Caco-2 (cell line): ENCODE measurements at regions of chr3 and their contacts with region 1.

Region 1: GRCh38 chr3:188749010-188749617 is 422.7 kb upstream of the TPRG1 start:
- DNase-seq: peak in 1 of 2 experiments; percentile 13
- H3K4me3 ChIP-seq: no peak overlapping the region
- H3K4me3 Mint-ChIP-seq: no peak overlapping the region
- H3K27ac Mint-ChIP-seq: no peak overlapping the region
- H3K4me1 ChIP-seq: peaks cover 47% of the 10 kb centered on the region
- H3K4me1 Mint-ChIP-seq: peaks cover 41% of the 10 kb centered on the region
- H3K27me3 ChIP-seq: no peaks in the 10 kb centered on the region
- H3K27me3 Mint-ChIP-seq: no peaks in the 10 kb centered on the region
- CTCF ChIP-seq: peak in 1 of 2 experiments; percentile 21

Region 2: DNA sequence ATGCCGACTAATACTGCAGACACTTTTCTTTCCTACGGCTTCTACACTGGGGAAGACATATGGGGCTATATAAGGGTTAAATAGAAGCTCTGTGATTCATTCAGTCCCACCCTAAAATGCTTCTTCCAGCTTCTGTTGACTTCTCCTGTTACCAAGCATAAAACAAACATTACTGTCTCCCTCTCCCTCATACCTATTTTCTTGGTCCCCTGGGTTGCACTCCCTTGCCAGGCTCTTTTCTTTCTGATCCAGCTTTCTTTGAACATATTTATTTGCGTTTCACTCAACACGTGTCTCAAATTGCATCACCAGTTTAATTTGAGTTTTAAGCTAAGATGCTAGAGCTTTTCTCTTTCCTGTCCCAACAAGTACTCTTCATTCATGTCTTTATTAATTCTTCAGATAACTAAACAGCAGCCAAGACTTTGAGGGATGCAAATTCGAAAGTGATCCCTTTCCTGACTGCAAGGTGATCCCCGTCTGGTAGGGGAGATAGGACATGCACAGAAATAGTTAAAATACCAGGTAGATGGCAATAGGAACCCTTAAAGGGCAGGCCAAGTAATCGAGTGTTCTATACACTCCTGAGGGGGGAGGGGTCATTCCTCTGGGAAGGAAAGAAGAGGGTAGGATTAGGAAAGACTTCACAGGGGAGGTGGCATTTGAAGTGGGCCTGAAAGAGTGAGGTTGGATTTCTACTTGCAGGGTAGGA is 805.3 kb before region 1 on chr3:
- CTCF ChIA-PET with region 1: no interaction called
- POLR2A ChIA-PET with region 1: interaction called, 3 read pairs
- intact Hi-C with region 1: loop called (anchors 5 kb)
- DNase-seq: peak in 1 of 2 experiments; percentile 25
- H3K4me3 ChIP-seq: no peak overlapping the region
- H3K4me3 Mint-ChIP-seq: no peak overlapping the region
- H3K27ac Mint-ChIP-seq: no peak overlapping the region
- H3K4me1 ChIP-seq: peaks cover 21% of the 10 kb centered on the region
- H3K4me1 Mint-ChIP-seq: peaks cover 7% of the 10 kb centered on the region
- H3K27me3 ChIP-seq: no peaks in the 10 kb centered on the region
- H3K27me3 Mint-ChIP-seq: no peaks in the 10 kb centered on the region
- CTCF ChIP-seq: no peak

Region 3: GRCh38 chr3:188294823-188295487 is 454.2 kb before region 1 on chr3:
- CTCF ChIA-PET with region 1: no interaction called
- POLR2A ChIA-PET with region 1: no interaction called
- intact Hi-C with region 1: loop called (anchors 2 kb)
- DNase-seq: peak; percentile 46 to 53
- H3K4me3 ChIP-seq: no peak overlapping the region
- H3K4me3 Mint-ChIP-seq: peak overlapping the region; percentile 53
- H3K27ac Mint-ChIP-seq: peak overlapping the region; percentile 78
- H3K4me1 ChIP-seq: peaks cover 57% of the 10 kb centered on the region
- H3K4me1 Mint-ChIP-seq: peaks cover 68% of the 10 kb centered on the region
- H3K27me3 ChIP-seq: no peaks in the 10 kb centered on the region
- H3K27me3 Mint-ChIP-seq: no peaks in the 10 kb centered on the region
- CTCF ChIP-seq: no peak

Region 4: GRCh38 chr3:188458756-188459155 is 290.4 kb before region 1 on chr3:
- CTCF ChIA-PET with region 1: no interaction called
- POLR2A ChIA-PET with region 1: no interaction called
- intact Hi-C with region 1: no loop called
- DNase-seq: no peak
- H3K4me3 ChIP-seq: no peak overlapping the region
- H3K4me3 Mint-ChIP-seq: no peak overlapping the region
- H3K27ac Mint-ChIP-seq: no peak overlapping the region
- H3K4me1 ChIP-seq: no peaks in the 10 kb centered on the region
- H3K4me1 Mint-ChIP-seq: peaks cover under 1% of the 10 kb centered on the region
- H3K27me3 ChIP-seq: no peaks in the 10 kb centered on the region
- H3K27me3 Mint-ChIP-seq: no peaks in the 10 kb centered on the region
- CTCF ChIP-seq: no peak

Region 5: DNA sequence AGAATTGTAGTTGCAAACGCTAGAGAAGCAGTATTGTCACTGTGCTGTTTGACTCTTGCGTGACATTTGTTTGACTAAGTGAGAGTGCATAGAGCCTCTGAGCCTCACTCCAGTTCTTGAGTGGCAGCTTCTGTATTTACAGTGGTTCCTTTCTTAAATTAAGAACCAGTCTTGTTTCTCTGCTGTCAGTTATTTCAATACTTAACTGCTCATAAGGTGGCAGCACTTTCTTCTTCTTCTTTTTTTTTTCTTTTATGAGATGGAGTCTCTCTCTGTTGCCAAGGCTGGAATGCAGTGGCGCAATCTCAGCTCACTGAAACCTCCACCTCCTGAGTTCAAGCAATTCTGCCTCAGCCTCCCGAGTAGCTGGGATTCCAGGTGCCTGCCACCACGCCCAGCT is 223.1 kb before region 1 on chr3:
- CTCF ChIA-PET with region 1: no interaction called
- POLR2A ChIA-PET with region 1: no interaction called
- intact Hi-C with region 1: loop called (anchors 2 kb)
- DNase-seq: peak; percentile 35 to 55
- H3K4me3 ChIP-seq: no peak overlapping the region
- H3K4me3 Mint-ChIP-seq: no peak overlapping the region
- H3K27ac Mint-ChIP-seq: peak overlapping the region; percentile 42
- H3K4me1 ChIP-seq: peaks cover 10% of the 10 kb centered on the region; the same call in 1 of the 2 replicates
- H3K4me1 Mint-ChIP-seq: peaks cover 11% of the 10 kb centered on the region
- H3K27me3 ChIP-seq: no peaks in the 10 kb centered on the region
- H3K27me3 Mint-ChIP-seq: no peaks in the 10 kb centered on the region
- CTCF ChIP-seq: no peak

Region 6: GRCh38 chr3:188697127-188697526 is 52.0 kb before region 1 on chr3:
- CTCF ChIA-PET with region 1: no interaction called
- POLR2A ChIA-PET with region 1: no interaction called
- intact Hi-C with region 1: no loop called
- DNase-seq: no peak
- H3K4me3 ChIP-seq: no peak overlapping the region
- H3K4me3 Mint-ChIP-seq: no peak overlapping the region
- H3K27ac Mint-ChIP-seq: no peak overlapping the region
- H3K4me1 ChIP-seq: no peaks in the 10 kb centered on the region
- H3K4me1 Mint-ChIP-seq: no peaks in the 10 kb centered on the region
- H3K27me3 ChIP-seq: no peaks in the 10 kb centered on the region; the same call in 1 of the 2 replicates
- H3K27me3 Mint-ChIP-seq: no peaks in the 10 kb centered on the region
- CTCF ChIP-seq: no peak

Region 7: DNA sequence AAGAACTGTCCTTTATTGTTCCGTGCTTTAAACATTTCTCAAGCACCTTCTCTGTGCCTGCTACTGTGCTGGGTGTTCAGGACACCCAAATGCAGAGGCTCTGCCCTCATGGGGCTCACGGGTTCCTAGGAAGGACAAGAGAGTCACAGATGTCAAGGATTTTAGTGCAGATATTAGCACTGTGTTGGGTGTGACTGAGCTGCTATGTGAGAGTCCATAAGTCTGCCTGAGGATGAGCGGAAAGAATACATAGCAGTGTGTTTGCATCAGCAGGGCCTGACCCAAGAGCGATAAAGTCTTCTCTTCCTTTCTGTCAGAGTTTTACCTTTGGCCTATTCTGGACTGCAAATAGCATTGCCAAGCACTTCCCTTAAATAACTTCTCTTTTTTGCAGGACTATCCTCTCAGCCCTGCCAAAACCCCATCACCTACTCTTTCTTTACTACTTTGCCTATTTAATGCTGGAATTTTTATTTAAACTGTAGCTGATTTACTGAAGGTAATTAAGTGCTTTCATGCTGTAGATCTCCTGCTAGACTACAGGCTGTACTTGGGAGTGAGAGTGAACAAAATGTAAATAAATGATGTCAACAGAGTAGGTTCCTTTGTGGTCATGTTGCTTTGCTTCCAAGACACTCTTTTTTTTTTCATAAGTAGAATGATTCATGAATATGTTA is 36.7 kb before region 1 on chr3:
- CTCF ChIA-PET with region 1: no interaction called
- POLR2A ChIA-PET with region 1: no interaction called
- intact Hi-C with region 1: loop called (anchors 2 kb)
- DNase-seq: peak; percentile 10 to 44
- H3K4me3 ChIP-seq: no peak overlapping the region
- H3K4me3 Mint-ChIP-seq: no peak overlapping the region
- H3K27ac Mint-ChIP-seq: no peak overlapping the region
- H3K4me1 ChIP-seq: peaks cover 18% of the 10 kb centered on the region
- H3K4me1 Mint-ChIP-seq: peaks cover 27% of the 10 kb centered on the region
- H3K27me3 ChIP-seq: no peaks in the 10 kb centered on the region
- H3K27me3 Mint-ChIP-seq: no peaks in the 10 kb centered on the region
- CTCF ChIP-seq: no peak

Region 8: DNA sequence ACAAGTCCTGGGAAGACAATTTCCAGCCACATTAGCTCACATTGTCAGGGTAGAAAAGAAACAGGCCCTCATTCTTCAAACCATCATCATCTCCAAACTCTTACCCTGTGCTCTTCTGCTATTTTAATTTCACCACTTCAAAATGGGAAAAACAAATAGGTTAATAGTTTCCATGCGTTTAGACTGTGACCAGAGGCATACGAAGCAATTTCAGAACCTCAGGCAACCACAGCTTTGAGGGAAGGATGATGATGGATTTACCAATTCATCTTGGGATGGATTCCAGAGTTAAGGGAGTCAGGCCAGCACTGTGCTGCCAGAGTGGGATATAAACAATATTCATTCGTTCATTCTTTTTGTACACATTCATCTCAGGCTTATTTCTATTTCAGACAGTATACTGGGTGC is 114.9 kb after region 1 on chr3:
- CTCF ChIA-PET with region 1: no interaction called
- POLR2A ChIA-PET with region 1: no interaction called
- intact Hi-C with region 1: no loop called
- DNase-seq: no peak
- H3K4me3 ChIP-seq: no peak overlapping the region
- H3K4me3 Mint-ChIP-seq: no peak overlapping the region
- H3K27ac Mint-ChIP-seq: no peak overlapping the region
- H3K4me1 ChIP-seq: no peaks in the 10 kb centered on the region; the same call in 1 of the 2 replicates
- H3K4me1 Mint-ChIP-seq: no peaks in the 10 kb centered on the region
- H3K27me3 ChIP-seq: no peaks in the 10 kb centered on the region
- H3K27me3 Mint-ChIP-seq: no peaks in the 10 kb centered on the region
- CTCF ChIP-seq: no peak

Region 9: GRCh38 chr3:188918066-188918465 is 169.0 kb after region 1 on chr3:
- CTCF ChIA-PET with region 1: no interaction called
- POLR2A ChIA-PET with region 1: no interaction called
- intact Hi-C with region 1: loop called (anchors 1 kb)
- DNase-seq: peak; percentile 47 to 74
- H3K4me3 ChIP-seq: no peak overlapping the region
- H3K4me3 Mint-ChIP-seq: peak overlapping the region; percentile 46
- H3K27ac Mint-ChIP-seq: peak overlapping the region; percentile 62
- H3K4me1 ChIP-seq: peaks cover 37% of the 10 kb centered on the region
- H3K4me1 Mint-ChIP-seq: peaks cover 42% of the 10 kb centered on the region
- H3K27me3 ChIP-seq: no peaks in the 10 kb centered on the region
- H3K27me3 Mint-ChIP-seq: no peaks in the 10 kb centered on the region
- CTCF ChIP-seq: no peak